ENCODE measurements at regions of chr18 and their contacts with region 1.

Region 1: GRCh38 chr18:43587538-43588153 is 310.4 kb upstream of the SYT4 start:
- DNase-seq: no peak
- ATAC-seq: peak in 2 of 4 donors; percentile 68 to 69
- H3K4me3 ChIP-seq: no peak overlapping the region
- H3K27ac ChIP-seq: no peak overlapping the region
- H3K4me1 ChIP-seq: no peaks in the 10 kb centered on the region
- H3K27me3 ChIP-seq: no peaks in the 10 kb centered on the region
- CTCF ChIP-seq: peak; percentile 78

Region 2: GRCh38 chr18:42114310-42114943 is 1473.2 kb before region 1 on chr18:
- intact Hi-C with region 1: loop called in 1 of 2 experiments (anchors 10 kb)
- DNase-seq: peak in 1 of 2 donors; percentile 48
- ATAC-seq: peak; percentile 40 to 89 (median 74)
- H3K4me3 ChIP-seq: no peak overlapping the region
- H3K27ac ChIP-seq: no peak overlapping the region
- H3K4me1 ChIP-seq: no peaks in the 10 kb centered on the region
- H3K27me3 ChIP-seq: no peaks in the 10 kb centered on the region
- CTCF ChIP-seq: peak; percentile 85

Region 3: GRCh38 chr18:43571078-43571689 is 16.5 kb before region 1 on chr18:
- intact Hi-C with region 1: loop called in 1 of 2 experiments (anchors 1 kb)
- DNase-seq: no peak
- ATAC-seq: no peak
- H3K4me3 ChIP-seq: no peak overlapping the region
- H3K27ac ChIP-seq: no peak overlapping the region
- H3K4me1 ChIP-seq: no peaks in the 10 kb centered on the region
- H3K27me3 ChIP-seq: no peaks in the 10 kb centered on the region
- CTCF ChIP-seq: peak; percentile 68

Region 4: DNA sequence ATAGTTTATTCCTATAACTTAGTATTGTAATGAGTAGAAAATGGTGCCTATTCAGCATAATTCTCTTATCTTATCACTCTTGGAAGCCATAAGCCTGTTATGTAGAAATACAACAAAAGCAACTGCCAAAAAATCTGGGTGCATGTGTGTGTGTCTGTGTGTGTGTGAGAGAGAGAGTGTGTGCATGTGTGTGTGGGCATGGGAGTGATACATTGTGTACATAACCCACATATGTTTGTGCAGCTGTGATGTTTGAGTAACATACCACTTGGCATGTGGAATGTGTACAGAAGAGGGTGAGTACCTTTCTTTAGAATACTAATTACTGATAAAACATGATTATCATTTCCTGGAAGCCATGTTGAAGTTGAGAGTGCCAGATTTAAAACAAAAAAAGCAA is 331.9 kb after region 1 on chr18:
- intact Hi-C with region 1: no loop called
- DNase-seq: no peak
- ATAC-seq: no peak
- H3K4me3 ChIP-seq: no peak overlapping the region
- H3K27ac ChIP-seq: no peak overlapping the region
- H3K4me1 ChIP-seq: no peaks in the 10 kb centered on the region
- H3K27me3 ChIP-seq: no peaks in the 10 kb centered on the region
- CTCF ChIP-seq: no peak